ENCODE measurements at regions of chr10 and their contacts with region 1.

Region 1: GRCh38 chr10:95133016-95133752 is 60.9 kb upstream of the ACSM6 start:
- DNase-seq: peak; percentile 57 to 86 (median 60)
- ATAC-seq: peak; percentile 93
- H3K4me3 ChIP-seq: no peak overlapping the region
- H3K27ac ChIP-seq: no peak overlapping the region
- H3K4me1 ChIP-seq: no peaks in the 10 kb centered on the region
- H3K27me3 ChIP-seq: no peaks in the 10 kb centered on the region
- CTCF ChIP-seq: peak; percentile 71 to 86 (median 76)
- EP300 ChIP-seq: no peak
- POLR2A ChIP-seq: no peak
- RAD21 ChIP-seq: peak; percentile 69 to 88

Region 2: GRCh38 chr10:95183271-95184230 is 50.4 kb after region 1 on chr10:
- CTCF ChIA-PET with region 1: no interaction called
- POLR2A ChIA-PET with region 1: no interaction called
- in situ Hi-C with region 1: no loop called
- intact Hi-C with region 1: loop called (anchors 1 kb)
- DNase-seq: peak; percentile 85 to 91 (median 88)
- ATAC-seq: peak; percentile 100
- H3K4me3 ChIP-seq: peak overlapping the region; percentile 63
- H3K27ac ChIP-seq: peak overlapping the region; percentile 48; the same call in 1 of the 3 replicates
- H3K4me1 ChIP-seq: peaks cover 0 to 10% of the 10 kb centered on the region in 2 experiments; a peak in 2 of 5 replicates
- H3K27me3 ChIP-seq: no peaks in the 10 kb centered on the region; a peak in 2 of 5 replicates
- CTCF ChIP-seq: peak; percentile 77 to 98 (median 93)
- EP300 ChIP-seq: no peak
- POLR2A ChIP-seq: peak; percentile 70
- RAD21 ChIP-seq: peak; percentile 75

Region 3: GRCh38 chr10:95236068-95236903 is 103.1 kb after region 1 on chr10:
- CTCF ChIA-PET with region 1: interaction called, 5 read pairs
- POLR2A ChIA-PET with region 1: no interaction called
- in situ Hi-C with region 1: loop called (anchors 10 kb)
- intact Hi-C with region 1: no loop called
- DNase-seq: no peak
- ATAC-seq: peak; percentile 29; the same call in 1 of the 3 replicates
- H3K4me3 ChIP-seq: no peak overlapping the region
- H3K27ac ChIP-seq: no peak overlapping the region
- H3K4me1 ChIP-seq: no peaks in the 10 kb centered on the region
- H3K27me3 ChIP-seq: no peaks in the 10 kb centered on the region
- CTCF ChIP-seq: no peak
- EP300 ChIP-seq: no peak
- POLR2A ChIP-seq: no peak
- RAD21 ChIP-seq: no peak

Measured in K562 (cell line).